ENCODE measurements at regions of chr7 and their contacts with region 1.

Region 1: DNA sequence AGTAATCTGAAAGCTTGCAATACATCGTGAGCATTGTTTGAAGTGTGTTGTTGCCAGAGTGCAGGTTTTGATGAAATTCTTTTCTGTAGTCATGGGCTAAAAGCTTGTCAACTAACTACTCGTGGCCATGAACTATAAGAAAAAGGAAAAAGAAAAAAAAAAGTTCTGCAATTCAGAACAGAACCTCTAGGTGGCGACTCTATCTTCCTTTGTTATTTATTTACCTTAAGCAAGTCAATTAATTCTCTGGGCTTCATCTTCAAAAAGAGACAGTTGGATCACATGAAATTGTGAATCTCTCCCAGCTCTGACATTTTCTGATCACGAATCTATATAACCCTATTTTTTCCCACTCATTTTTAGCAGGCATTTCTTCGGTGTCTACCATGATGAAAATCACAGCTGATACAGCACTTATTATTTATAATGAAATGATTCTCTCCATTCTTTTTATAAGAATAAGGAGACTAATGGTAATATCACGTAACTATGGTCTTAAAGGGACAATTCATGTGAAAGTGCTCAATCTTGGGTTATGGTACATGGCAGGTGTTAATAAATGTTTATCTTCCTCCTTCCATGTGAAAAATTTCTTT is 18.8 kb downstream of the TMEM196 start:
- DNase-seq: no peak
- H3K4me3 ChIP-seq: no peak overlapping the region
- H3K27ac ChIP-seq: no peak overlapping the region
- H3K4me1 ChIP-seq: no peaks in the 10 kb centered on the region
- H3K27me3 ChIP-seq: no peaks in the 10 kb centered on the region
- CTCF ChIP-seq: peak; percentile 58 to 82 (median 68)
- EP300 ChIP-seq: no peak
- POLR2A ChIP-seq: no peak

Region 2: DNA sequence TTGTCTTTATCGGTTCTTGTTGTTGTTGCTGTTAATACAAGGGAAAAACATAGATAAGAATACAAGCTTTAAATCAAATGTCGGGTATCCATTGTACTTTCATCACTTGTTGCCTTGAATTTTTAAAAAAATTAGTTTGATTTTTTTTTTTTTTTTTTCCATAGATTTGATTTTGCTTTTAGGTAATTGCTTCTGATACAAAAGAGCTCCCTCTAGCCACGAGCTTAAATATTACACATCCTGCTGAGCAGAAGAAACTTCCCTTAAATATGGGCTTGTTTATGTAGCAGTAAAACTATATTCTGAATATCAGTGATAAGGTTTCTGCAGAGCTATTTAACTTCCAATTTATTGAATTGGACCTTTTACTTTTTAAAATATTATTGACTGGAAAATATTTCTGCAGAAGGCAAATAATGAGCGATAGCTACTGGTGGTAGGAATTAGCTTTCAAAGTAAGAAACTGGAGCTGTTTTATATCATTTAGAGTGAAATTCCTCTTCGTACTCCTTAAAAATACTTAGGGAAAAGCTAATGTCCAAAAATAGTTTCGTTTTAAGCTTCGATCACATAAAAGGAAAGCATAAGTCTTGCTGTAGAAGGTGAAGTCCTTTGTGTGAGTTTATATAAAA is 262.7 kb before region 1 on chr7:
- in situ Hi-C with region 1: no loop called
- intact Hi-C with region 1: no loop called
- DNase-seq: no peak
- H3K4me3 ChIP-seq: no peak overlapping the region
- H3K27ac ChIP-seq: no peak overlapping the region
- H3K4me1 ChIP-seq: no peaks in the 10 kb centered on the region
- H3K27me3 ChIP-seq: no peaks in the 10 kb centered on the region
- CTCF ChIP-seq: peak in 3 of 5 experiments; percentile 19 to 34 (median 31)
- EP300 ChIP-seq: no peak
- POLR2A ChIP-seq: no peak

Region 3: DNA sequence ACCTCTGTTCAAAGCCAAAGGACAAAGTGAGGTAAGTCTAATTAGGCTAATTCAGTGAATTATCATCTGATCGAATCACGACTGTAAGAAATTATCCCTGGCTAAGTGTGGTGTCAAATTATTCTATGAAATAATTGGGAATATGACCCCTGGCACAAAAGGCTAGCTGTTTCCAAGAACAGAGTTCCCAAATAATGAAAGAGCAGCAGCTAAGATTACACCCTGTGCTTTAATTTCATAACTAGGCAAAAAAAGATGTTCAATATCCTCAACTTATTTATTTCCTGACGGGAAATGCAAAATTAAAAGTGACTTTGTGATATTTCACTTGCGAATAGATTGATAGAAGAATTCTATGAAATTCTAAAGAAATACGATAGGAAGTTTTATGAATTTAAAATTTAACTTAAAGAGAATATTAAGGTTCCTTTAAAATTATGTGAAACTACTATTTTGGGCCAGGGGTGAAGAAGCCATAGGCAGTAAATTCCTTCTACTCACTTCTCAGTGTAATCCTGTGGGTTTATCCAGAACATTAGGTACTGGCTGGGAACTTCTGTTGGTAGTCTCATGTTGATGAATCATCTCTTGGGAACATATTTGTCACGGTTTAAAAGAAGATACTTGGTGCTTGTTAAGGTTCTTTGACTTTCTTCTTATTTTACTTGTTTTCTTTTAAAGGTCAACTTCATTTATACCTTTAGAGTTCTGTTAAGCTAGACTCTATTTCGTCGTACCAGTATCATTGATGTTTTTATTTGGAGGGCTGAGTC is 194.3 kb before region 1 on chr7:
- in situ Hi-C with region 1: no loop called
- intact Hi-C with region 1: no loop called
- DNase-seq: no peak
- H3K4me3 ChIP-seq: no peak overlapping the region
- H3K27ac ChIP-seq: no peak overlapping the region
- H3K4me1 ChIP-seq: no peaks in the 10 kb centered on the region
- H3K27me3 ChIP-seq: no peaks in the 10 kb centered on the region
- CTCF ChIP-seq: no peak
- EP300 ChIP-seq: no peak
- POLR2A ChIP-seq: no peak

Region 4: DNA sequence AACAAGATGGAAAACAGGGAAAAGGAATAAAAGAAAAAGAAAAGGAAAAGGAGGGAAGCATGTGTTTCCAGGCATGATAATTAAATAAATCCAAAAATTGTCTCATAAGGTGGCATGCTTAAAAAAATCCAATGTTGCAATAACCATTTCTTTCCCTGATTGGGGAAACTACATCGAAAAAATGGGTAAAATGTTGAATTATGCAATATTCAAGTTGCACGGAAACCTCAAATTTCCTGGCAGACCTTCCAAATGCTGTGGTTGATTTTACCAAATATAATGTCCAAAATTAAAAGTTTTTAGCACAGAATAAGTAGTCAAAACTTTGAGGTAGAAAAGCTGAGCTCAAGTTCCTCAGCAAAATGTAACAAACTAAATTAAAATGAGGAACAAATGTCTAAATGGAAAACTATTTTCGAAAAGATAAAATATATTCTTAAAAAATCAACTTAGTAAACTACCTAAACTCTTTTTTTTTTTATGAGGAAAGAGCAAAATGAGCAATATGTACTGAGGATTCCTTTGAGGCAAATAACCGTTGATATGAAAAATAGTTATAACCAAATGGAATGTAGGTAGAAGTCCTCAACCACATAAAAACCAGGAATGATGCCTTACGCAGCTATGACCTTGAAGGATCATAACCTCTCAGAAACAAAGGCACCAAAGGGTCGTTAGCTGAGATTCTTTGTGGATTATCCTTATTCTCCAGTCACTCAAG is 410.0 kb after region 1 on chr7:
- in situ Hi-C with region 1: loop called in 2 of 4 experiments (anchors 10 to 25 kb)
- intact Hi-C with region 1: no loop called
- DNase-seq: no peak
- H3K4me3 ChIP-seq: no peak overlapping the region
- H3K27ac ChIP-seq: no peak overlapping the region
- H3K4me1 ChIP-seq: no peaks in the 10 kb centered on the region
- H3K27me3 ChIP-seq: no peaks in the 10 kb centered on the region
- CTCF ChIP-seq: no peak
- EP300 ChIP-seq: no peak
- POLR2A ChIP-seq: no peak

Region 5: DNA sequence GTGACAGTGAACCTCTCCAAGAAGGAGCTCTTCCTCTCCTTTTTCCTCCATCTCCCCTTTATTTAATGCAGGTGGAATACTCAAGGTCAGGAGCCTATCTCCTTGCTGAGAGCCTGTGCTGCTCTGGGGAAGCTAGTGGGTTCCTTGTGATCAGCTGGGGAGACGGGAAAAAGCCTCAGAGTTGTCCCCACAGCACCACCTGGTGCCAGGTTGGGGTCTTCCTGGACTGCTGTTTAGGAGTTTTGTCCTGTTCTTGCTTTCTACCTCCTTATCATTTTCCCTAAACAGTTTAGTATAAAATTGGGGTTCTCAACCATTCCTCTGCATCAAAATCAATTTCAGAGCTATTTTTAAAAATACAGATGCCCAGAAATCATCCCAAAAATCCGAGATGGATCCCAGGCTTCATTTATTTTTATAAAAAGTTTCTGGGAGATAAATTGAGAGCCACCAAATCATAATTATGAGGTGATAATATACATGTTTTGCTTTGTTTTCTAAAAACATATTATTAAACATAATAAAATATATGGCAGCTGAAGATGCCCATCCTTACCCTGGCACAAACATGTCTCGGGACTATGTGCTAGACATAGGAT is 418.2 kb after region 1 on chr7:
- in situ Hi-C with region 1: loop called in 2 of 4 experiments (anchors 10 to 25 kb)
- intact Hi-C with region 1: loop called (anchors 10 kb)
- DNase-seq: peak; percentile 62
- H3K4me3 ChIP-seq: no peak overlapping the region
- H3K27ac ChIP-seq: no peak overlapping the region
- H3K4me1 ChIP-seq: peaks cover 0 to 8% (median 2%) of the 10 kb centered on the region in 4 donors
- H3K27me3 ChIP-seq: no peaks in the 10 kb centered on the region
- CTCF ChIP-seq: peak; percentile 35 to 56 (median 43)
- EP300 ChIP-seq: no peak
- POLR2A ChIP-seq: no peak

Region 6: GRCh38 chr7:20330240-20330927 is 575.8 kb after region 1 on chr7 and contains the start of gene ITGB8:
- in situ Hi-C with region 1: loop called in 1 of 4 experiments (anchors 25 kb)
- intact Hi-C with region 1: no loop called
- DNase-seq: peak; percentile 83
- H3K4me3 ChIP-seq: peak within 1 kb of the TSS; percentile 54 to 84 (median 75)
- H3K27ac ChIP-seq: peak within 1 kb of the TSS; percentile 90 to 96 (median 93)
- H3K4me1 ChIP-seq: peaks cover 0 to 18% (median 0%) of the 10 kb centered on the region in 4 donors
- H3K27me3 ChIP-seq: no peaks in the 10 kb centered on the region
- CTCF ChIP-seq: no peak
- EP300 ChIP-seq: no peak
- POLR2A ChIP-seq: peak; percentile 74
- total RNA-seq, gene ITGB8: 3.0 to 14.0 (median 8.6) TPM

Measured in transverse colon (tissue), 4 donors.